Posterior vena cava (tissue), 2 donors: ENCODE measurements at regions of chr10 and their contacts with region 1.

Region 1: GRCh38 chr10:85510682-85511081 is 855.9 kb downstream of the GRID1 start:
- DNase-seq: no peak

Region 2: DNA sequence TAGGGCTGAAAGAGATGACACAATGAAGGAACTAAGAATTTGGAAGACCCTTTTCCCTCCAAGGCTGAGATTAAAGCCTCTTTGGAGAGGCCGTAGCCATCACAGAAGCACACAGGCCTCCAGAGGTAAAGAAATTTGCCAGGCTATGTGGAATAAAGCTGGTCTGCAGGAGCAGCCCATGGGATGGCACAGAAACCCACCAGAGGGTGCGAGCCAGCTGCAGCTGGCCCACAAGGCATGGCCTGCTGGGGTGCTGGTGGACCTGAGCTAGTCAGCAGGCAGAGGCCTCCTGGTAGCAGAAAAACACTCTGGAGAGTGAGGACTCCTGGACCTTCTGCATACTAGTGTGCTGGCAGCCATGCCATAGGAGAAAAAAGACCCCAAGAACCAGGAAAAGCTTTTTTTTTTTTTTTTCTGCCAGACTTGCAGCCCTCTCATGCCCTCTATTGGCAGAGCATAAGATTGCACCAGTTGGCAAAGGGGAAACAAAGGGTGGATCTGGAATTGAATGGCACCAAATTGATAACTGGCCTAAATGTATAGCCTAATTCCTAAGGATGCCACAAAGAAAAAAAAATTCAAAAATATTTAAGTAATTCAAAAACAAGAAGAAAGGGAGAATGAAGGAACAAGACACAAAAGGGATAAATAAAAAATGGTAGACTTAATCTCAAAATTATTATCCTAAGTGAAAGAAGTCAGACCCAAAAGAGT is 1484.0 kb before region 1 on chr10:
- intact Hi-C with region 1: loop called in 1 of 2 experiments (anchors 10 kb)
- DNase-seq: no peak

Region 3: GRCh38 chr10:86090807-86091206 is 580.1 kb after region 1 on chr10:
- intact Hi-C with region 1: loop called in 1 of 2 experiments (anchors 5 kb)
- DNase-seq: no peak

Region 4: GRCh38 chr10:87064651-87065050 is 1554.0 kb after region 1 on chr10:
- intact Hi-C with region 1: no loop called
- DNase-seq: no peak